GM12878 (cell line): ENCODE measurements at regions of chr1 and their contacts with region 1.

Region 1: GRCh38 chr1:205485338-205486228 is 18.9 kb upstream of the CDK18 start:
- DNase-seq: no peak
- ATAC-seq: peak; percentile 65
- H3K4me3 ChIP-seq: no peak overlapping the region
- H3K27ac ChIP-seq: no peak overlapping the region
- H3K4me1 ChIP-seq: peaks cover 14% of the 10 kb centered on the region
- H3K27me3 ChIP-seq: 0 out of 4 replicates have a peak, but pooled peaks cover 0 to 1% of the 10 kb centered on the region in 2 experiments
- CTCF ChIP-seq: peak; percentile 94 to 97 (median 96); a peak in 5 of 6 replicates
- EP300 ChIP-seq: no peak
- POLR2A ChIP-seq: no peak
- RAD21 ChIP-seq: peak; percentile 98

Region 2: GRCh38 chr1:205321164-205321958 is 164.2 kb before region 1 on chr1 and contains the start of gene NUAK2:
- CTCF ChIA-PET with region 1: interaction called, 40 read pairs
- POLR2A ChIA-PET with region 1: interaction called, 4 read pairs
- RAD21 ChIA-PET with region 1: interaction called, 24 read pairs
- SMC1A ChIA-PET with region 1: interaction called, 9 read pairs
- in situ Hi-C with region 1: no loop called
- intact Hi-C with region 1: no loop called
- DNase-seq: no peak
- ATAC-seq: peak; percentile 85
- H3K4me3 ChIP-seq: peak within 1 kb of the TSS; percentile 36; the same call in 1 of the 2 replicates
- H3K27ac ChIP-seq: no peak within 1 kb of the TSS
- H3K4me1 ChIP-seq: peaks cover 13% of the 10 kb centered on the region
- H3K27me3 ChIP-seq: peaks cover 0 to 8% of the 10 kb centered on the region in 2 experiments; a peak in 3 of 4 replicates
- CTCF ChIP-seq: peak in 1 of 3 experiments; percentile 21; a peak in 1 of 6 replicates
- EP300 ChIP-seq: no peak
- POLR2A ChIP-seq: peak; percentile 44; the same call in 1 of the 2 replicates
- RAD21 ChIP-seq: peak; percentile 9; the same call in 1 of the 2 replicates
- polyA plus RNA-seq, gene NUAK2: 0.27 to 0.31 TPM

Region 3: DNA sequence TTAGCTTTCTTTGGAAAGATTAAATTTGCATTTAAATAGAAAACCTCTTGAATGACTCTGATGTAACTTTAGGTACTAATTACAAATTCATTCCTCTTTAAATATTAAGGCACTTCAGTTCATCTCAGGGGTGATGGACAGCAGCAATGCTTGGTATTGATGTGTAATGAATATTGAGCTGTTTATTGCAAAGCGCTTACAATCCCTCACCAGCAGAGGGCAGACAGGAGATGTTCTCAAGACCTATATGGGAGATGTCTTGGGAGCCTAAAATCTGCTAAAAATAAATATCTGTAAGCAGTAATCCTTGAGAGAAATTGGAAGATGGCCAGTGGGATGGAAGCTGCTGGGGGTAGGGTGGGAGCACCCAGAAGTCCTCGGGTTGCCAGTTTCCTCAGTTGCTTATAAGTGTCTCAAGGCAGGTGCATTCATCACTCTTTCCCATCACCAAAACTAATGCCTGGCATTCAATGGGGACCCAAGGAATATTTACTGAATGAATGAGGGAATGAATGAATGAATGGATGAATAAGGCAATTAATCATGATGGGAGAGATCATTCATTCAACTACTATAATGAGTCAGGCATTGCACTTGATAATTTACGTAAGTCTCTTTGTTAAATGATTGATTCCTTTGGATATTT is 131.2 kb before region 1 on chr1:
- CTCF ChIA-PET with region 1: interaction called, 167 read pairs
- POLR2A ChIA-PET with region 1: no interaction called
- RAD21 ChIA-PET with region 1: interaction called, 65 read pairs
- SMC1A ChIA-PET with region 1: interaction called, 107 read pairs
- in situ Hi-C with region 1: no loop called
- intact Hi-C with region 1: loop called (anchors 1 kb)
- DNase-seq: peak; percentile 9
- ATAC-seq: peak; percentile 91
- H3K4me3 ChIP-seq: no peak overlapping the region
- H3K27ac ChIP-seq: no peak overlapping the region
- H3K4me1 ChIP-seq: no peaks in the 10 kb centered on the region
- H3K27me3 ChIP-seq: peaks cover 0 to 4% of the 10 kb centered on the region in 2 experiments; a peak in 3 of 4 replicates
- CTCF ChIP-seq: peak; percentile 74 to 83 (median 83)
- EP300 ChIP-seq: no peak
- POLR2A ChIP-seq: no peak
- RAD21 ChIP-seq: peak; percentile 69

Region 4: GRCh38 chr1:205416322-205416721 is 69.3 kb before region 1 on chr1:
- CTCF ChIA-PET with region 1: interaction called, 99 read pairs
- POLR2A ChIA-PET with region 1: interaction called, 5 read pairs
- RAD21 ChIA-PET with region 1: interaction called, 12 read pairs
- SMC1A ChIA-PET with region 1: interaction called, 7 read pairs
- in situ Hi-C with region 1: no loop called
- intact Hi-C with region 1: no loop called
- DNase-seq: no peak
- ATAC-seq: no peak
- H3K4me3 ChIP-seq: no peak overlapping the region
- H3K27ac ChIP-seq: no peak overlapping the region
- H3K4me1 ChIP-seq: no peaks in the 10 kb centered on the region
- H3K27me3 ChIP-seq: peaks cover 0 to 6% of the 10 kb centered on the region in 2 experiments; a peak in 3 of 4 replicates
- CTCF ChIP-seq: no peak
- EP300 ChIP-seq: no peak
- POLR2A ChIP-seq: no peak
- RAD21 ChIP-seq: no peak

Region 5: DNA sequence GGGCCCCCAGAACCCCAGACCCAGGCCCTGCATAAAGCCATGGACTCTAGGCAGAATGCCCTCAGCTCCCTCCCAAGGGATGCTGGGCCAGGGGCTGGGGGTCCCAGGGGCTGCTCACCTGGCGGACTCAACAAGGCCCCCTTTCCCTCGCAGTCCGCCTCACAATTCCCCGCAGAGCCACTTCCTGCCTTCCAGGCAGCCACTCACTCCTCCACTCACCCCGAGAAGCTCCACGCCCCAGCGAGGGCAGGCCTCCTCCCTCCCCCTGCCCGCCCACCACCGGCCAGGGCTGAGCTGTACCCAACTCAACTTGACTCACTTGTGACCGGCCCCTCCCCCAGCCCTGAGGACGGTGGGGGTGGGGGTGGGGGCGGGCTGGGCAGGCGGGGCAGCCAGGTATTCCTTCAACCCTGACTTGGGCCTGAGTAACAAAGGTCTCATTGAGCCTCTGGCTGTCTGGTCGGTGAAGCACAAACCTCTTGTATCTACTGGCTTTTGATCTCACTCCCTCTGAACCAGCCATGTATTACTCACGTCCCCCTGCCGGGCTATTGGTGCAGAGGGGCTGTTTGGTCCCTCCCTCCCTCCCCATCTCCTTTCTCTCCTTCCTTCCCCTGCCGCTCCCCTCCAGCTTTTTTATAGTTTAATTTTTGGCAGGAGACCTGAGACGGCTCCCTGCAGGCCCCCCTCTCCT is 35.7 kb before region 1 on chr1:
- CTCF ChIA-PET with region 1: interaction called, 19 read pairs
- POLR2A ChIA-PET with region 1: no interaction called
- RAD21 ChIA-PET with region 1: interaction called, 36 read pairs
- SMC1A ChIA-PET with region 1: interaction called, 6 read pairs
- in situ Hi-C with region 1: no loop called
- intact Hi-C with region 1: no loop called
- DNase-seq: no peak
- ATAC-seq: peak; percentile 89
- H3K4me3 ChIP-seq: no peak overlapping the region
- H3K27ac ChIP-seq: no peak overlapping the region
- H3K4me1 ChIP-seq: peaks cover 5% of the 10 kb centered on the region; the same call in 1 of the 2 replicates
- H3K27me3 ChIP-seq: peaks cover 3 to 5% of the 10 kb centered on the region in 2 experiments; a peak in 3 of 4 replicates
- CTCF ChIP-seq: no peak
- EP300 ChIP-seq: no peak
- POLR2A ChIP-seq: no peak
- RAD21 ChIP-seq: no peak

Region 6: DNA sequence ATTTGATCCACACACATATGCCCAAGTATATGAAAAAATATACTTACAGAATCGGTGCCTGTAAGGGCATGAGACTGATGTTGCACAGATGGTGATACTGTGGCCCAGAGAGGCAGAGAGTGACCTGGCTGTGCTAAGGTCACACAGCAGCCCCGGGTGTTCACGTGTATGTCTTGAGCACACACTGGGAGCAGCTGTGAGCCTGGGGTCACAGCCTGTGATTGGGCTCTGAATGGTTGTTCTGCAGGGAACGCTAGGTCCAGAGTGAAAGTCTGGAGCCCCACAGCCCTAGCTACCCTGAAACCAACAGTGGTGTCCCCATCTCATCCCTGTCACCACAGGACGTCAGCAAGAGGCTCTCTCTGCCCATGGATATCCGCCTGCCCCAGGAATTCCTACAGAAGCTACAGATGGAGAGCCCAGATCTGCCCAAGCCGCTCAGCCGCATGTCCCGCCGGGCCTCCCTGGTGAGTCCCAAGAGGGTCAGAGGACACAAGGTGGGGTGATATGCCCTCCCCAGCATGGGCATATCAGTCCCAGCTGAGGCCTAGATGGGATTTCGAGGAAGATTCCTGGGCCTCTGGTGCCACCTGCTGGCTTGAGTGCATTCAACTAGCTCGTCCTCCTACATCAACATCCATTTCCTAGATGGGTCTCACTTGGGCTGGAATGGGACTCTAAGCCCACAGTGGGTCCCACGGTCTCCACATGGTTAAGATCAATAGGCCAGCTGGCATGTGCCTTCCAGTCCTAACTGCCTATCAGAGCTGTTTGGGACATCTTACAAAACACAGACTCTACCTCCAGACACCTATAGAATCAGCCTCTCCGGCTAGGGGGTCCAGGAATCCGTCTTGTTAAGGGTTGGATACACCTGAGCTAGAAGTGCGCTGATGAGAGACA is 38.6 kb after region 1 on chr1:
- CTCF ChIA-PET with region 1: interaction called, 891 read pairs
- POLR2A ChIA-PET with region 1: interaction called, 6 read pairs
- RAD21 ChIA-PET with region 1: interaction called, 342 read pairs
- SMC1A ChIA-PET with region 1: interaction called, 319 read pairs
- in situ Hi-C with region 1: loop called (anchors 5 kb)
- intact Hi-C with region 1: loop called (anchors 1 kb)
- DNase-seq: no peak
- ATAC-seq: peak; percentile 80
- H3K4me3 ChIP-seq: no peak overlapping the region
- H3K27ac ChIP-seq: no peak overlapping the region
- H3K4me1 ChIP-seq: no peaks in the 10 kb centered on the region
- H3K27me3 ChIP-seq: peaks cover 0 to 1% of the 10 kb centered on the region in 2 experiments; a peak in 3 of 4 replicates
- CTCF ChIP-seq: peak; percentile 75 to 85 (median 77)
- EP300 ChIP-seq: no peak
- POLR2A ChIP-seq: no peak
- RAD21 ChIP-seq: peak; percentile 79